ENCODE measurements at regions of chr3 and their contacts with region 1.

Region 1: GRCh38 chr3:165185707-165186327 is 10.4 kb downstream of the SLITRK3 start:
- DNase-seq: peak; percentile 65
- H3K4me3 ChIP-seq: no peak overlapping the region
- H3K4me3 Mint-ChIP-seq: no peak overlapping the region
- H3K27ac Mint-ChIP-seq: no peak overlapping the region
- H3K4me1 ChIP-seq: no peaks in the 10 kb centered on the region
- H3K4me1 Mint-ChIP-seq: no peaks in the 10 kb centered on the region
- H3K27me3 ChIP-seq: no peaks in the 10 kb centered on the region
- H3K27me3 Mint-ChIP-seq: no peaks in the 10 kb centered on the region
- CTCF ChIP-seq: peak; percentile 73 to 80

Region 2: GRCh38 chr3:164451072-164451910 is 734.5 kb before region 1 on chr3:
- CTCF ChIA-PET with region 1: no interaction called
- POLR2A ChIA-PET with region 1: no interaction called
- intact Hi-C with region 1: loop called (anchors 1 kb)
- DNase-seq: no peak
- H3K4me3 ChIP-seq: no peak overlapping the region
- H3K4me3 Mint-ChIP-seq: no peak overlapping the region
- H3K27ac Mint-ChIP-seq: no peak overlapping the region
- H3K4me1 ChIP-seq: no peaks in the 10 kb centered on the region
- H3K4me1 Mint-ChIP-seq: no peaks in the 10 kb centered on the region
- H3K27me3 ChIP-seq: no peaks in the 10 kb centered on the region
- H3K27me3 Mint-ChIP-seq: no peaks in the 10 kb centered on the region
- CTCF ChIP-seq: no peak

Region 3: DNA sequence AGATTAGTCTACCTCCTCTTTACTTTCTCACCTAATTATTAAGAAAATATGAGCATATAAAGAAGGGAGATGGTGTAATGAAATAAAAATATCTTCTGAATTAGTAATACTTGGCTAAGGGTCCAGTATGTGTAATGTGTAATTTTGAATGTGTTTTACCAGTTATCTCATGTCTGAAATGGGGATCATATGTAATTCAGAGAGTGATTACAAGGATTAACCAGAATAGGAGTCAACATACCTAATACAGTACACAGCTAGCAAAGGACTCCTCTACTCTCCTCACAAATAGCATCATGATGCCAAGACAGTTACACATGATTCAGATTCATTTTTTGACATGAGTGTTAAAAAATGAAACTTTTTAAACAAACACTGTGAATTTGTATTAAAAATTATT is 677.9 kb before region 1 on chr3:
- CTCF ChIA-PET with region 1: no interaction called
- POLR2A ChIA-PET with region 1: no interaction called
- intact Hi-C with region 1: no loop called
- DNase-seq: no peak
- H3K4me3 ChIP-seq: no peak overlapping the region
- H3K4me3 Mint-ChIP-seq: no peak overlapping the region
- H3K27ac Mint-ChIP-seq: no peak overlapping the region
- H3K4me1 ChIP-seq: no peaks in the 10 kb centered on the region
- H3K4me1 Mint-ChIP-seq: no peaks in the 10 kb centered on the region
- H3K27me3 ChIP-seq: no peaks in the 10 kb centered on the region
- H3K27me3 Mint-ChIP-seq: peaks cover 4% of the 10 kb centered on the region
- CTCF ChIP-seq: no peak

Region 4: GRCh38 chr3:164779816-164780215 is 406.0 kb before region 1 on chr3:
- CTCF ChIA-PET with region 1: no interaction called
- POLR2A ChIA-PET with region 1: no interaction called
- intact Hi-C with region 1: loop called (anchors 1 kb)
- DNase-seq: no peak
- H3K4me3 ChIP-seq: no peak overlapping the region
- H3K4me3 Mint-ChIP-seq: no peak overlapping the region
- H3K27ac Mint-ChIP-seq: no peak overlapping the region
- H3K4me1 ChIP-seq: no peaks in the 10 kb centered on the region
- H3K4me1 Mint-ChIP-seq: no peaks in the 10 kb centered on the region
- H3K27me3 ChIP-seq: no peaks in the 10 kb centered on the region
- H3K27me3 Mint-ChIP-seq: no peaks in the 10 kb centered on the region
- CTCF ChIP-seq: no peak

Region 5: DNA sequence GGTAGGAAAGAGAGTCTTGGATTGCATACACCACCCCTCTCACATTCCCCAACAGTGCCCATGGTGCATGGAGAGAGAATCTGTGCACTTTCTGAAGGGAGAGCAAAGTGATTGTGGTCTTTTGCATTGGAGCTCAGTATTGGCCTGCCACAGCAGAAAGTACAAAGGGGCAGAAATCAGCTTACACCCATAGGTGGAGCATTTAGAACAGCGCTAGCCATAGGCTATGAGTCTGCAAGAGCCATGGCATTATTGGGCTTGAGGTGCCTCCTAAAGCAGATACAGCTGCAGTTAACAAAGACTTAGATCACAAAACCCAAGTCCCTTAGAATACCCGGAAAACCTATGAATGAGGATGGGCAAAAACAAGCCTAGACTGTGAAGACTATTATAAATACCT is 129.3 kb before region 1 on chr3:
- CTCF ChIA-PET with region 1: no interaction called
- POLR2A ChIA-PET with region 1: no interaction called
- intact Hi-C with region 1: loop called (anchors 1 kb)
- DNase-seq: peak in 1 of 2 experiments; percentile 4
- H3K4me3 ChIP-seq: no peak overlapping the region
- H3K4me3 Mint-ChIP-seq: no peak overlapping the region
- H3K27ac Mint-ChIP-seq: no peak overlapping the region
- H3K4me1 ChIP-seq: no peaks in the 10 kb centered on the region
- H3K4me1 Mint-ChIP-seq: no peaks in the 10 kb centered on the region
- H3K27me3 ChIP-seq: no peaks in the 10 kb centered on the region
- H3K27me3 Mint-ChIP-seq: no peaks in the 10 kb centered on the region
- CTCF ChIP-seq: peak in 1 of 2 experiments; percentile 35

Region 6: DNA sequence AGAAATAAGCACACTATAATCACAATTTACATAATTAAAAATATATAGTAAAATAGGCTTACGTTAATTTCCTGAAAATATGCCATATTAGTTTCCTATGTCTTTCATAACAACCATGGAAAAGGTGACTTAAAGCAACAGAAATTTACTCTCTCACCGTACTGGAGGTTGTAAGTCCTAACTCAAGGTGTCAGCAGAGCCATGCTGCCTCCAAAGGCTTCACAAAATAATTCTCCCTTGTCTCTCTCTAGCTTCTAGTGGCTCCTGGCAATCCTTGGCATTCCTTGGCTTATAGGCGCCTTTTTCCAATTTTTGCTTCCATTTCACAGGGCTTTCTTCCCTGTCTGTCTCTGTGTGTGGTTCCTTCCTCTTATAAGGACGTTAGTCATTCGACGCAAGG is 115.1 kb before region 1 on chr3:
- CTCF ChIA-PET with region 1: no interaction called
- POLR2A ChIA-PET with region 1: no interaction called
- intact Hi-C with region 1: loop called (anchors 1 kb)
- DNase-seq: peak in 1 of 2 experiments; percentile 5
- H3K4me3 ChIP-seq: no peak overlapping the region
- H3K4me3 Mint-ChIP-seq: no peak overlapping the region
- H3K27ac Mint-ChIP-seq: no peak overlapping the region
- H3K4me1 ChIP-seq: no peaks in the 10 kb centered on the region
- H3K4me1 Mint-ChIP-seq: no peaks in the 10 kb centered on the region
- H3K27me3 ChIP-seq: no peaks in the 10 kb centered on the region
- H3K27me3 Mint-ChIP-seq: no peaks in the 10 kb centered on the region
- CTCF ChIP-seq: peak in 1 of 2 experiments; percentile 27

Region 7: GRCh38 chr3:165075695-165076094 is 110.1 kb before region 1 on chr3:
- CTCF ChIA-PET with region 1: no interaction called
- POLR2A ChIA-PET with region 1: no interaction called
- intact Hi-C with region 1: loop called (anchors 1 kb)
- DNase-seq: no peak
- H3K4me3 ChIP-seq: no peak overlapping the region
- H3K4me3 Mint-ChIP-seq: no peak overlapping the region
- H3K27ac Mint-ChIP-seq: no peak overlapping the region
- H3K4me1 ChIP-seq: no peaks in the 10 kb centered on the region
- H3K4me1 Mint-ChIP-seq: no peaks in the 10 kb centered on the region
- H3K27me3 ChIP-seq: no peaks in the 10 kb centered on the region
- H3K27me3 Mint-ChIP-seq: no peaks in the 10 kb centered on the region
- CTCF ChIP-seq: no peak

Region 8: DNA sequence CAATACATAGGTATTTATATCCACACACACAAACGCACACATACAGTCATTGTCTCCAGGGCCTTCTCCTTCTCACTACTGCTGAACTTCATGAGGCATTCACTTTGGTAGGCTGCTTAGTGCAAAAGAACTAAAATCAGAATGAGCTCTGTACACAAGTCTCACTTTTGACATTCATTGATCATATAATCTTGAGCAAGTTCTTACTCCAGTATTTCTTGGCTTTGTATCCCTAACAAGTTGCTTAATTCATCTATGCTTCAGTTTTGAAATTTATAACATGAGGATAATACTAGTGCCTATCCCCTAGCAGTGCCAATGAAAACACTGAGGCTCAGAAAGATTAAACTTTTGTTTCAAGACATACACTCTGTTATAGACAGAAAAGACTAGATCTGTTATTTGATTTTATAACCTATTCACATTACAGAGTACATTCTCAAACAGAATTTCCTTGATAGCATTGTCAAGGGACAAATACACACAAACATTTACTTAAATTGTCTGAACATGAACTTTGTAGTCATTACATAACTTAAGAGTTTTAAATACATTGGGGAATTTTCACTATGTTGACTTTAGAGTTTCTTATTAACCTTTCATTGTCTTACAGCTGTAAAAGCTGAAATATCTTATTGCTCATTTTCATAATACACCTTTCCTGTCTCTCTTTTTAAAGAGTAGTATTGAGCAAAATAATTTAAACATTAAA is 52.5 kb before region 1 on chr3:
- CTCF ChIA-PET with region 1: no interaction called
- POLR2A ChIA-PET with region 1: no interaction called
- intact Hi-C with region 1: loop called (anchors 5 kb)
- DNase-seq: peak in 1 of 2 experiments; percentile 7
- H3K4me3 ChIP-seq: no peak overlapping the region
- H3K4me3 Mint-ChIP-seq: peak overlapping the region; percentile 30
- H3K27ac Mint-ChIP-seq: no peak overlapping the region
- H3K4me1 ChIP-seq: peaks cover 14% of the 10 kb centered on the region
- H3K4me1 Mint-ChIP-seq: peaks cover 7% of the 10 kb centered on the region
- H3K27me3 ChIP-seq: no peaks in the 10 kb centered on the region
- H3K27me3 Mint-ChIP-seq: no peaks in the 10 kb centered on the region
- CTCF ChIP-seq: no peak

Region 9: DNA sequence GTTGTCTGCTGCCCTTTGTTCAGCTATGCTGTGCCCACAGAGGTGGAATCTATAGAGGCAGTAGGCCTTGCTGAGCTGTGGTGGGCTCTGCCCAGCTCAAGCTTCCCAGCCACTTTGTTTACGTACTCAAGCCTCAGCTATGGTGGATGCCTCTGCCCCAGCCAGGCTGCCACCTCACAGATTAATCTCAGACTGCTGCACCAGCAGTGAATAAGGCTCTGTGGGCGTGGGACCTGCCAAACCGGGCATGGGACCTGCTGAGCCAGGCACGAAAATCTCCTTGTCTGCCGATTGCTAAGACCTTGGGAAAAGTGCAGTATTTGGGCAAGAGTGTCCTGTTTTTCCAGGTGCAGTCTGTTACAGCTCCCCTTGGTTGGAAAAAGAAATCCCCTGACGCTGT is 16.4 kb before region 1 on chr3:
- CTCF ChIA-PET with region 1: no interaction called
- POLR2A ChIA-PET with region 1: no interaction called
- intact Hi-C with region 1: no loop called
- DNase-seq: no peak
- H3K4me3 ChIP-seq: no peak overlapping the region
- H3K4me3 Mint-ChIP-seq: no peak overlapping the region
- H3K27ac Mint-ChIP-seq: no peak overlapping the region
- H3K4me1 ChIP-seq: no peaks in the 10 kb centered on the region
- H3K4me1 Mint-ChIP-seq: no peaks in the 10 kb centered on the region
- H3K27me3 ChIP-seq: no peaks in the 10 kb centered on the region
- H3K27me3 Mint-ChIP-seq: no peaks in the 10 kb centered on the region
- CTCF ChIP-seq: no peak